ENCODE measurements at regions of chr11 and their contacts with region 1.

Region 1: GRCh38 chr11:2002807-2003206 is 5.2 kb upstream of the H19 start:
- DNase-seq: no peak

Region 2: DNA sequence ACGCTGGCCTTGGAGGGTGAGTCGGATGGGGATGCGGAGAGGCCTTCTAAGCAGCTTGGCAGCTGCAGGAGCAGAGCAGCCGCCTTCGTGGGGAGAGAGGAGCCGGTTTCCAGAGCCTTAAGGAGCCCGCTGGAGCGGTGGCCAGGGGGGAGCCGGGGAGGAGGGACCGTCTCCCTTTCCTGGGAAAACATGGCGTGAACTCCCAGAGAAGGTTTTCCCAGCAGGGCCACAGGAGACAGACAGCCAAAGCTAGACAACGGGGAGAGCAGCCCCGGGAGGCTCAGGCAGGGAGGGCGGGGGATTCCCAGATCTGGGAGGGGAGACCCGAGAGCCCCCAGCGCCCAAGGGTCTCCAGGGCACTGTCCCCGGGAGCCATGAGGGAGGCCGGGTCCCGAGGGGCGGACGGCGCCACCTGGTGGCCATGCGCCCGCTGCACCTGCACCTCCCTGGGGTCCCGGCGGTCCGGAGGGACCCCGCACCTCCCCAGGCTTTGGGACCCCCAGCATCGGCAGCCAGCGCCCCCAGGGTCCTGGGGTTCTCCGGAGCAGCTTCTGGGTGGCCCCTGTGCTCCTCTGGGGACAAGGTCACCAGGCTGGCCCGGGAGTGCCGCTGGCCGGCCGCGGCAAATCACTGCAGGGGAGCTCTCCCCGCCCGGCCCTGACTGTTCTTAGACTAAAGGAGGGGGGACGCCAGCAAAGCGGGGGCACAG is 170.4 kb before region 1 on chr11:
- CTCF ChIA-PET with region 1: interaction called, 10 read pairs
- POLR2A ChIA-PET with region 1: no interaction called
- DNase-seq: peak; percentile 81

Region 3: DNA sequence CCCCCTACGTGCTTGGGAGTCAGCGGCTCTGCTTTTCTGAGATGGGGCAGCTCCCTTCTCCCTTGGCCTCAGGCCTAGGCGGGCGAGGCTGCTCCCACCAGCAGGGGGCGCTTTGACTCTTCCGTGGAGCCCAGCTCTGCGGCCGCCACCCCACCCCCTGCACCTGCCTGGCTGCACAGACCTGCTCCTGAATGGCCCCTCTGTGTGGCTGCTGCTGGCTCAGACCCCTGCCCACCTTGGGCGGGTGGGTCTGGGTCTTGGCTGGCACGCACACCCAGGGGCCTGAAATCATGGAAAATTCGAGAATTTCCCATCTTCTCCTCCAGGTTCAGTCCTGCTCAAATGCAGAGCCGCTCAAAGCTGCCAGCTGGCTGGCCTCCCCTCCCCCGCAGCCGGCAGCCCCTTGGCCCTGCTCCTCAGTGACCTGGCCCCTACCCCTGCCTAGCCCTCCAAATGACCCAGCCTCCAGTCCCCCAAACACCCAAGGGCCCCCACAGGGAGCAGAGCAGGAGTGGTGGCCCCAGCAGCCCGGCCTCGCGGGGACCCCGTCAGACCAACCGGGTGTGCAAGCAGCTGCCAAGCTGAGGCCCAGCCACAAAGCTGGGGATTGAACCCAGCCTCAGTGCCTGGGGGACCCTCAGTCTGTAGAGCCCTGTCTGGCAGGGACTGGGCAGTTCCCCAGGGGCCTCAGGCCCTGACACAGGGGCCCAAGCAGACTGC is 120.1 kb before region 1 on chr11:
- CTCF ChIA-PET with region 1: interaction called, 12 read pairs
- POLR2A ChIA-PET with region 1: no interaction called
- DNase-seq: peak; percentile 89

Region 4: DNA sequence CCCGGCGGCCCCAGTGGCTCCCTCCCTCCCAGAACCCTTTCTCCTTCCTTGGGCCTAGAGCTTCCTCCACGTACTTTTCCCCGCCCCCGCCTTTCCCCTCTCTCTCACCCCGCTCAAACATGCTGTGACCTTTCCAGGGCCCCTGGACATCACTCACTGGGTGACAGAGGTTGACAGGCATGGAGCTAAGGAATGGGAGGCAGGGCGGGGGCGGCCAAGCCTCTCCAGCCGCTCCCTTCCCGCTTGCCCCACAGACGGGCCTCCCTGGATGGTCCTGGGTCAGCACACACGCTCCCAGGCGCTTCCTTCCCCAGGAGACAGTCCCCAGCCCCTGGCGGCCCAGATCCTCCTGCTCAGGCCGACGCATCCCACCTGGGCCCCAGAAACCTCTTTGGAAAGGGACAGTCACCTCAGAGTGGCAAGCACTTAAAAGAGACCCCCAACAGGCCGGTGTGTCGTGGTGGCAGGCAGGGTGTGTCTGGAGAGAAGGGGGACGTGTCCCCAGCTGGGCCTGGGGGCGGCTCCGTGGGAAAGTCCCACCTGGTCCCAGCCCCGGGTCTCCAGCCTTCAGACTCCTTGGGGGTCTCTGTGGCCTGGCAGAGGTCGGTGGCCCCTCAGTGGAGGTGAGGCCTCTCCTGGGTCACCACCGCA is 14.0 kb before region 1 on chr11:
- CTCF ChIA-PET with region 1: no interaction called
- POLR2A ChIA-PET with region 1: no interaction called
- DNase-seq: no peak

Region 5: GRCh38 chr11:2293984-2294925 is 291.4 kb after region 1 on chr11:
- CTCF ChIA-PET with region 1: no interaction called
- POLR2A ChIA-PET with region 1: no interaction called
- DNase-seq: no peak

Measured in HEK293T (cell line).